ENCODE measurements at regions of chr6 and their contacts with region 1.

Region 1: DNA sequence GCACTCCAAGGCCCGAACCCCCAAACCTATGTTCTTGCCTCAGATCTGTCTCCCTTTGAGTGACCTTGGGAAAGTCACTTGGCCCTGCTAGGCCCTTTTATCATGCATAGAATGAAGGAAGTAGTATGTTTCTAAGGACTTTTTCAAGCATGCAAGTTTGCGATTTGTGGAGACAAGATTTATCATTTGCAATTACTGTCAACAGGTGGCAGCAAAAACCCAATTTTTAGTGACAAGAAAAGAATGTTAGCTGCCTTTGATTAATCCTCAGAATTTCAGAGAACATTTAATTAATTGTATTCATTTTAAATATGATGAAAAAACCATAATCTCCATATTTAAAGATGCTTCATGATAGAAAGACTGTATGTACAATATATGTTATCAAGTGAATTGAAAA is 28.3 kb upstream of the PREP start:
- DNase-seq: peak; percentile 51
- ATAC-seq: 0 out of 2 replicates have a peak, but pooled peaks have one; percentile 33
- H3K4me3 ChIP-seq: no peak overlapping the region
- H3K27ac ChIP-seq: no peak overlapping the region
- H3K4me1 ChIP-seq: peaks cover 12 to 31% of the 10 kb centered on the region in 2 experiments; a peak in 3 of 4 replicates
- H3K27me3 ChIP-seq: no peaks in the 10 kb centered on the region
- CTCF ChIP-seq: peak; percentile 45 to 67 (median 51); a peak in 5 of 6 replicates
- POLR2A ChIP-seq: no peak
- RAD21 ChIP-seq: peak; percentile 75

Region 2: GRCh38 chr6:105151644-105152043 is 279.6 kb before region 1 on chr6:
- CTCF ChIA-PET with region 1: no interaction called
- POLR2A ChIA-PET with region 1: no interaction called
- RAD21 ChIA-PET with region 1: no interaction called
- intact Hi-C with region 1: no loop called
- DNase-seq: no peak
- ATAC-seq: no peak
- H3K4me3 ChIP-seq: no peak overlapping the region
- H3K27ac ChIP-seq: no peak overlapping the region
- H3K4me1 ChIP-seq: no peaks in the 10 kb centered on the region
- H3K27me3 ChIP-seq: no peaks in the 10 kb centered on the region
- CTCF ChIP-seq: no peak
- POLR2A ChIP-seq: no peak
- RAD21 ChIP-seq: no peak

Region 3: GRCh38 chr6:105510746-105511145 is 79.5 kb after region 1 on chr6:
- CTCF ChIA-PET with region 1: no interaction called
- POLR2A ChIA-PET with region 1: no interaction called
- RAD21 ChIA-PET with region 1: no interaction called
- intact Hi-C with region 1: no loop called
- DNase-seq: no peak
- ATAC-seq: no peak
- H3K4me3 ChIP-seq: no peak overlapping the region
- H3K27ac ChIP-seq: no peak overlapping the region
- H3K4me1 ChIP-seq: no peaks in the 10 kb centered on the region
- H3K27me3 ChIP-seq: no peaks in the 10 kb centered on the region
- CTCF ChIP-seq: no peak
- POLR2A ChIP-seq: no peak
- RAD21 ChIP-seq: no peak

Region 4: GRCh38 chr6:105835373-105835772 is 404.1 kb after region 1 on chr6:
- CTCF ChIA-PET with region 1: interaction called, 13 read pairs
- POLR2A ChIA-PET with region 1: no interaction called
- RAD21 ChIA-PET with region 1: no interaction called
- intact Hi-C with region 1: no loop called
- DNase-seq: peak; percentile 21
- ATAC-seq: peak; percentile 65; the same call in 1 of the 2 replicates
- H3K4me3 ChIP-seq: no peak overlapping the region
- H3K27ac ChIP-seq: no peak overlapping the region
- H3K4me1 ChIP-seq: no peaks in the 10 kb centered on the region
- H3K27me3 ChIP-seq: no peaks in the 10 kb centered on the region
- CTCF ChIP-seq: peak; percentile 24 to 56 (median 53); a peak in 5 of 6 replicates
- POLR2A ChIP-seq: no peak
- RAD21 ChIP-seq: peak; percentile 48

Region 5: DNA sequence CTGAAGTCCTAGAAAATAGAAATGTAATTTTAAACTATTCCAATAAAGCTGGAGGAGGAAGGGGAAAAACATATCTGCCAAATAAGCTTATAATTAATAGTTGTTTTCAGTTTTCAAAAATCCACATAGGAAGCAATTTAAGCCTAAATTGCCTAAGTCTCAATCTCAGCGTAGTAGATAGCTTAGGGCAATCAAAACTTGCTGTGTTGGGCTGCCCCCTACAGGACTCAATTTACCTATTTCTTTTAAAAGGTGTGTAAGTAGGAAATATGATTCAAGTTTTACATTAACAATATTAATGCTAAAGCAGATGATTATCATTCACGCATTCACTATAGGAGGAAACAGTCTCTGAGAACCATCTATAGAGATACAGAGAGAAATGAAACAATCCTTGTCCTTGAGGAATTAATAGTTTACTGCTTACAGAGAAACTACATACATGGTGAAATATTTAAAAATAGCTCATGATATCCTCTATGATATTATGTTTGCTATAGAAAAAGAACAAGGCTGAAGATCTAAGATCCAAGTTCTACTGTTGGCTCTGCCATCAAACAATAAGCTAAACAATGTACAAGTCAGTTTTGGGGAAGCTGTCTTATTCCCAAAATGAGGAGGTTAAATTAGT is 792.2 kb after region 1 on chr6:
- CTCF ChIA-PET with region 1: interaction called, 14 read pairs
- POLR2A ChIA-PET with region 1: no interaction called
- RAD21 ChIA-PET with region 1: interaction called in 1 of 2 experiments, 4 read pairs
- intact Hi-C with region 1: loop called (anchors 1 kb)
- DNase-seq: peak; percentile 72
- ATAC-seq: peak; percentile 85
- H3K4me3 ChIP-seq: no peak overlapping the region
- H3K27ac ChIP-seq: no peak overlapping the region
- H3K4me1 ChIP-seq: no peaks in the 10 kb centered on the region
- H3K27me3 ChIP-seq: no peaks in the 10 kb centered on the region
- CTCF ChIP-seq: peak; percentile 60 to 80 (median 62)
- POLR2A ChIP-seq: no peak
- RAD21 ChIP-seq: peak; percentile 89

Region 6: GRCh38 chr6:106300944-106301343 is 869.7 kb after region 1 on chr6:
- CTCF ChIA-PET with region 1: interaction called, 11 read pairs
- POLR2A ChIA-PET with region 1: no interaction called
- RAD21 ChIA-PET with region 1: no interaction called
- intact Hi-C with region 1: loop called (anchors 2 kb)
- DNase-seq: no peak
- ATAC-seq: peak; percentile 53; the same call in 1 of the 2 replicates
- H3K4me3 ChIP-seq: no peak overlapping the region
- H3K27ac ChIP-seq: no peak overlapping the region
- H3K4me1 ChIP-seq: peaks cover 0 to 7% of the 10 kb centered on the region in 2 experiments; a peak in 1 of 4 replicates
- H3K27me3 ChIP-seq: no peaks in the 10 kb centered on the region
- CTCF ChIP-seq: peak; percentile 42 to 51 (median 46); a peak in 5 of 6 replicates
- POLR2A ChIP-seq: no peak
- RAD21 ChIP-seq: peak; percentile 68

Region 7: DNA sequence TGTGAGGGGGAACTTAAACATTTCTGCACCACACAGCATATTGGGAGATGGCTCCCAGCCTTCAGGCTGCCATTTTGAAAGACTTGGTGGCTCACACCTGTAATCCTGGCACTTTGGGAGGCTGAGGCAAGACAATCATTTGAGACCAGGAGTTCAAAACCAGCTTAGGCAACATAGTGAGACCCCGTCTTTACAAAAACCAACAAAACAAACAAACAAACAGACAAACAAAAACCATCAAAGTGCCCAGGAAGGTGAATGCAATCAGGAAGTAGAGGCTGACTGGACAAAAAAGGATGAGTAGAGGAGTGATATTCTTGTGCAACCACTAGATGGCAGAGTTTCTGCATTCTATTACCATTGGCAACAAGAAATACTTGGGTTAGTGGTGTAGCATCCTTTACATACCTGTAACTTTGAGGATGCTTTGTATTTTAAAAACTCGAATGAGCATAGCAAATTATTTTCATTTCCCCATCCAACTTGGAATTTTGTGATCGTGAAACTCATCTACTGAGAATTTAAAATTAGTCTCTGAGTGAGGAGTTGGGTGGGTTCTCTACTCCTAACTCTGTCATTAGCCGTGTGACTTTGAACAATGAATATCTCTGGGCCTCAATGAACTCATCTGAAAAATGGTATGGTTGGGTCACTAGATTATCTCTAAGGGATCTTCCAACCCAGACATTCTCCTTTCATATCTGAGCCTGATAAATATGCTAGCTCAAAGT is 1013.7 kb after region 1 on chr6:
- CTCF ChIA-PET with region 1: no interaction called
- POLR2A ChIA-PET with region 1: no interaction called
- RAD21 ChIA-PET with region 1: no interaction called
- intact Hi-C with region 1: loop called (anchors 10 kb)
- DNase-seq: peak; percentile 45
- ATAC-seq: peak; percentile 87
- H3K4me3 ChIP-seq: no peak overlapping the region
- H3K27ac ChIP-seq: no peak overlapping the region
- H3K4me1 ChIP-seq: no peaks in the 10 kb centered on the region
- H3K27me3 ChIP-seq: no peaks in the 10 kb centered on the region
- CTCF ChIP-seq: peak; percentile 66 to 76 (median 74)
- POLR2A ChIP-seq: no peak
- RAD21 ChIP-seq: peak; percentile 75

Measured in HCT116 (cell line).